Ovary (tissue), 10 donors: ENCODE measurements at regions of chr5 and their contacts with region 1.

Region 1: DNA sequence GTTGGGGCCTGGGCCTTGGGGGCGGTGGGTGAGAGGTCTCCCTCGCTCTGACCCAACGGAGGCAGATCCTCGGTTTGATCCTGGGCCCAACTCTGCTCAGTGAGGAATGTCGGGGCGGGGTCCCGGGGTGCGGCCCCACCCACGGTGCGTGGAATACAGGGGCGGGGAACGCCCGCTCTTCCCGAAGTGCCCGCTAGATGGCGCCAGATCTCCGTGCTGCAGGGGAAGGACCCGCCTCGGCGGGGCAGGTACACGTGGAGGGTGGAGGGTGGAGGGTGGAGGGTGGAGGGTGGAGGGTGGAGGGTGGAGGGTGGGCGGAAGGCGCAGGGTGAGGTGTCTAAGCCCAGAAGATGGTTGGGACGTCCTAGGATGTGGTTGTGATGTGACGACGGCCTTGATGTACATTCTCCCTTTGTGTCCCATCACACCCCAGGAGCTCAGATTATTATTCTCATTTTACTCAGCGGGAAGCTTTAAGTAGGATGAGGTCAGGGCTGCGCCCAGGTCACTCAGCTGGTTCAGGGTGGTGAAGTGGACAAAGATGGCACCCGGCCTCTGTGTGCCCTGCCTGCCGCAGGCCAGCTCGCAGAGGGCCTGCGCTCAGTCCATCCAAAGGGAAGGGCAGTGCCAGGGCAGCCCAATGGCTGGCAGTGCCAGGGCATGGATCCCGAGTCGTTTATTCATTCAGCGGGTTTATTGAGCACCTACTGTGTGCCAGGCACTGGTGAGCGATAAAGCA is 9.4 kb upstream of the RPS14 start:
- DNase-seq: peak; percentile 73 to 92 (median 86)
- H3K4me3 ChIP-seq: no peak overlapping the region
- H3K27ac ChIP-seq: no peak overlapping the region
- H3K4me1 ChIP-seq: peaks cover 6% of the 10 kb centered on the region
- H3K27me3 ChIP-seq: no peaks in the 10 kb centered on the region
- CTCF ChIP-seq: peak; percentile 76 to 94 (median 86)
- EP300 ChIP-seq: no peak
- POLR2A ChIP-seq: no peak

Region 2: GRCh38 chr5:150523472-150524350 is 64.7 kb after region 1 on chr5:
- intact Hi-C with region 1: loop called in 2 of 4 experiments (anchors 5 kb)
- DNase-seq: peak in 1 of 5 donors; percentile 59
- H3K4me3 ChIP-seq: no peak overlapping the region
- H3K27ac ChIP-seq: peak overlapping the region in 1 of 2 donors; percentile 38
- H3K4me1 ChIP-seq: peaks cover 15% of the 10 kb centered on the region
- H3K27me3 ChIP-seq: no peaks in the 10 kb centered on the region
- CTCF ChIP-seq: peak in 2 of 3 donors; percentile 43 to 59
- EP300 ChIP-seq: no peak
- POLR2A ChIP-seq: no peak

Region 3: DNA sequence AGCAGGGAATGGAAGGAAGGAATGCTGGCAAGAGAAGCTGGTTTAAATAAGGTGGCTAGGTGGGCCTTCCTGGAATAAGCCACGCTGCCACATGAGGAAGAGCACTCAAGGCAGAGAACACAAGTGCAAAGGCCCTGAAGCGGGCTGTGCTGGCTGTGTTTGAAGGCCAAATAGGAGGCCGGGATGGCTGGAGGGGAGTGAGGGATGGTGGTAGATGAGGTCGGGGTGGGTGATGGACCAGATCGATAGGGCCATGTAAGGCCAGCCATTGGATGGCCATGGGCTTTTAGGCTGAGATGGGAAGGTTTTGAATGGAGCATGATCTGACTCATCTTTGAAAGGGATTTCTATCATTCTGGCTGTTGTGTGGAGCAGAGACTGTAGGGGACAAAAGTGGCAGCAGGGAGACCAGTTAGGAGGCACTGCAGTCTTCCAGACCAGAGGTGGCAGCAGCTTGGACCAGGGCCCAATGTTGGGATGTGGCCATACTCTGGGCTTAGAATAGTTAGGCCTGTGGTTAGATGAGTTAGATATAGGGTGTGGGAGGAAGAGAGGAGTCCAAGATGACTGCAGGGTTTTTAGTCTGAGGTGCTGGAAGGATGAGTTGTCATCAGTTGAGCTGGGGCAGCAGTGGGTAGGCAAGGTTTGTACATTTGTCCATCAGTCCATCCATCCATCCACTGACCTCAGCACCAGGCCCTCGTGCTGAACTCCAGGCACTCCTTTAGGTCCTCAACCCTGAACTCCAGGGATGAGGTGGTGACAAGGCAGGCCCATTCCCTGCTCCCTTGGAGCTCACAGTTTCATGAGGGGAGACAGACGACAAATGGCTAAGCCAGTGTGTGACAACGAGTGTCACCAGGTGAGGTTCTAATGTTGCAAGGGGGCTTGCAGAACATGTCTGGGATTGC is 79.3 kb after region 1 on chr5:
- intact Hi-C with region 1: loop called in 2 of 4 experiments (anchors 5 kb)
- DNase-seq: no peak
- H3K4me3 ChIP-seq: no peak overlapping the region
- H3K27ac ChIP-seq: peak overlapping the region; percentile 52 to 88
- H3K4me1 ChIP-seq: peaks cover 48% of the 10 kb centered on the region
- H3K27me3 ChIP-seq: no peaks in the 10 kb centered on the region
- CTCF ChIP-seq: no peak
- EP300 ChIP-seq: no peak
- POLR2A ChIP-seq: no peak

Region 4: DNA sequence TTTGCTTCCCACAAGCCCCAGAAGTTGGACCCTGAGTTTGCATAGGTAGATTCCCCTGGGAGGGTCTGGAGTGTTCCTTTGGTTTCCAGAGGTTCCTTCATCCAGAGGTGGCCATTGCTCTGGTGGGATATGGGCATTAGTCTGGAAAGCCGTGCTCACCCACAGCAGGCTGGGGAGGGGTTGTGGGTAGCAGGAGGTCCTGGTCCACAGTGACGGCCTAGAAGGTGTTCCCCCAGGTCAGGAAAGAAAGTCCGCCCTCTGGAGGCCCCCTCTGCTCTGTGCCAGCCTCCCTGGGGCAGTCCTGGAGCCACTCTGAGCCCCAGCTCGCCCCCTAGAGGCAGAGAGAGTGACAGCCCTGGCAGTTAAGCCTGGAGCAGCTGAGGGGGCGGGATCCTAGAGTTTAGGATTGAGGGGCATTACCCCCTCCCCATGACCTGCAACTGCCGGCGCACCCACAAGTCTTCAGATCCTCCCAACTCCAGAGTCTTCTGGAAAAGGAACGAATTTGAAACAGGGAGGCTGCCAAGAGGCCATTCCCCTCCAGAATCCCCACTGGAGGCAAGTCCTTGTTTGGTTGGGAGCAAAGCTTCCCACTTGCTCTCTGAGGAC is 85.7 kb after region 1 on chr5:
- intact Hi-C with region 1: loop called in 3 of 4 experiments (anchors 5 kb)
- DNase-seq: peak; percentile 61 to 79 (median 72)
- H3K4me3 ChIP-seq: no peak overlapping the region
- H3K27ac ChIP-seq: no peak overlapping the region
- H3K4me1 ChIP-seq: peaks cover 16% of the 10 kb centered on the region
- H3K27me3 ChIP-seq: no peaks in the 10 kb centered on the region
- CTCF ChIP-seq: peak; percentile 46 to 72 (median 59)
- EP300 ChIP-seq: no peak
- POLR2A ChIP-seq: no peak

Region 5: DNA sequence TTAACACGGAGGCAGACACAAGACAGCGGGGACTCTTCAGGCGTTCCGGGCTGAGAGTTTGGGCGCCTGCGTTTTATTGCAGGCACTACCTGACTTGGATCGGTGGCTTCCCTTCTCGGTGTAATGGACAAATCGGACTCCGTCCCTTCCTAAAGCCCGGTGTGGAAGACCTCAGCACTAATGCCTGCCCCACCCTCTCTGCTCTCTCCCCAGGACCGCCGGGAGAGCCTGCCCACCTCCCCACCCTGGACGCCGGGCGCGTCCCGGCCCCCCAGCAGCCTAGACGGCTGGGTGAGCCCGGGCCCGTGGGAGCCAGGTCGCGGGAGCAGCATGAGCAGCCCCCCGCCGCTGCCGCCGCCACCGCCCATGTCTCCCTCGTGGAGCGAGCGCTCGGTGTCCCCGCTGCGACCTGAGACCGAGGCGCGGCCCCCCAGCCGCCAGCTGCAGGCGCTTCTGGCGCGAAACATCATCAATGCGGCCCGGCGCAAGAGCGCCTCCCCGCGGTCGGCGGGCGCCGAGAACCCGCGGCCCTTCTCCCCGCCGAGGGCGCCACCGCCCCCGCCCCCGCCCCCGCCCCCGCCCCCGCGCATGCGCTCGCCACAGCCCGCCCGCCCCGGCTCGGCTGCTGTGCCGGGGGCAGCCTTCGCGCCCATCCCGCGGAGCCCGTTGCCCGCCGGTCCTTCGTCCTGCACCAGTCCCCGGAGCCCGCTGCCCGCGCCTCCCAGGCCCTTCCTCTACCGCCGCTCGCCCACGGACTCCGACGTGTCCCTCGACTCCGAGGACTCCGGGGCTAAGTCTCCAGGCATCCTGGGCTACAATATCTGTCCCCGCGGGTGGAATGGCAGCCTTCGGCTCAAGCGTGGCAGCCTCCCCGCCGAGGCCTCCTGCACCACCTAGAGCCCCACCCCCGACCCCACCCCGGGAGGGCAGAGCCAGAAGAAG is 197.5 kb after region 1 on chr5:
- intact Hi-C with region 1: loop called in 2 of 4 experiments (anchors 5 to 10 kb)
- DNase-seq: peak; percentile 79 to 92 (median 87)
- H3K4me3 ChIP-seq: peak overlapping the region; percentile 45
- H3K27ac ChIP-seq: peak overlapping the region; percentile 35 to 39
- H3K4me1 ChIP-seq: peaks cover 21% of the 10 kb centered on the region
- H3K27me3 ChIP-seq: no peaks in the 10 kb centered on the region
- CTCF ChIP-seq: peak; percentile 39 to 77 (median 72)
- EP300 ChIP-seq: no peak
- POLR2A ChIP-seq: no peak

Region 6: GRCh38 chr5:150960791-150961396 is 501.9 kb after region 1 on chr5:
- intact Hi-C with region 1: no loop called
- DNase-seq: no peak
- H3K4me3 ChIP-seq: no peak overlapping the region
- H3K27ac ChIP-seq: no peak overlapping the region
- H3K4me1 ChIP-seq: no peaks in the 10 kb centered on the region
- H3K27me3 ChIP-seq: no peaks in the 10 kb centered on the region
- CTCF ChIP-seq: no peak
- EP300 ChIP-seq: no peak
- POLR2A ChIP-seq: no peak

Region 7: GRCh38 chr5:151020304-151021110 is 561.5 kb after region 1 on chr5 and contains the start of gene GPX3:
- intact Hi-C with region 1: loop called in 1 of 4 experiments (anchors 5 kb)
- DNase-seq: peak; percentile 82 to 91 (median 84)
- H3K4me3 ChIP-seq: peak within 1 kb of the TSS; percentile 64
- H3K27ac ChIP-seq: peak within 1 kb of the TSS; percentile 28 to 51
- H3K4me1 ChIP-seq: peaks cover 23% of the 10 kb centered on the region
- H3K27me3 ChIP-seq: no peaks in the 10 kb centered on the region
- CTCF ChIP-seq: no peak
- EP300 ChIP-seq: no peak
- POLR2A ChIP-seq: peak; percentile 79
- total RNA-seq, gene GPX3: 110 to 380 (median 269) TPM

Region 8: DNA sequence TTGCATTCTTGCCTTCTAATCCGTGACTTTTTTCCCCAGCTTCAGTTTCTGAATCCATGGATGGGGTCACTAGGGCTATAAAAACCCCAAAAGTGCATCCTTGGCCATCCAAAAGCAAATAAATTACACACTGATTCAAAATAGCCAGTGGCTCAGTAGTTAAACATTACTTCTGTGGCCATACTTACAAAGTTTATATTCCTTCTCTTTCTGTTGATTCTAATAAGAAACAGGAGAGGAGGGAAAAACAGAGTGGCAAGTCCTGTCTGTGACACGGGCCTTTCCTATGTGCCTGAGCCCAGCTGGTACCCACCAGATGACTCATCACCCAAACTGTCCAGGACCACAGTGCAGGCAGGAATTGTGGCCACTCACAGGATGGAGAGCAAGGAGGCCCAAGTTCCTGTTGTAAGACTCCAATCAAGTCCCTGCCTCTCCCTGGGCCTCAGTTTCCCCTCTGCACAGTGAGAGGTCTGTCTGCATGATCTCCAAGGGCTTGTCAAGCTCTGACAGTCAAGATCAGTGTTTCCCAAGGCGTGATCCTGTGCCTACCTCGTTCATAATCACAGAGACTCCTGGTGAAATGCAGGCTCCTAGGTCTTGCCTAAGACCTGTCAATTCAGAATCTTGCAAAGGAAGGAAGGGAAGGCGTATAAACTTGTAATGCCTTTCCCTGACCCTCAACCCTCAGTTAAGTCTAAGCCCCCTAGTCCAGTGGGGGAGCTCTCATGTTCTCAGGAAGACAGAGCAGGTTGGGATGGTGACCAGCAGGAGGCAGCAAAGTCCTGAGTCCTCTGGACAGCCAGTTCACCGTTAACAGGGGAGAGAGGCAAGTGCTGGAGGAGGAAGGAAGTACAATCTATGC is 592.3 kb after region 1 on chr5:
- intact Hi-C with region 1: no loop called
- DNase-seq: peak; percentile 81 to 90 (median 87)
- H3K4me3 ChIP-seq: no peak overlapping the region
- H3K27ac ChIP-seq: no peak overlapping the region
- H3K4me1 ChIP-seq: no peaks in the 10 kb centered on the region
- H3K27me3 ChIP-seq: no peaks in the 10 kb centered on the region
- CTCF ChIP-seq: peak; percentile 70 to 95 (median 81)
- EP300 ChIP-seq: no peak
- POLR2A ChIP-seq: no peak

Region 9: DNA sequence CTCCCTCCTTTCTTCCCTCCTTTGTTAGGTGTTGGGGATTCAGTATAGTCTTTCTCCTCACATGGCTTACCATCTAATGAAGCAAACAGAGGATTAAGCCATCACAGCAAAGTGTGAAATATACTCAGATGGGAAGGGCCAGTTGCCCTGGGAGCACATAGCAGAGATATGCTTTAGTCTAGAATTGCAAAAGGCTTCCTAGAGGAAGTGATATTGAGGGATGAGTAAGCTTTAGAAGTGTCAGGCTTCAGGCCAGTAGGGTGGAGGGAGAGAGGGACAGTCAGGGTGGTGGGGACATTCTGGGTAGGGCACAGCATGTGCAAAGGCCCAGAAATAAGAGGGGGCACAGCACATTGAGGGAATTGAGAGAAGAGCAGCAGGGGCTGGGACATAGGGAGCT is 1511.9 kb after region 1 on chr5:
- intact Hi-C with region 1: no loop called
- DNase-seq: no peak
- H3K4me3 ChIP-seq: no peak overlapping the region
- H3K27ac ChIP-seq: no peak overlapping the region
- H3K4me1 ChIP-seq: no peaks in the 10 kb centered on the region
- H3K27me3 ChIP-seq: no peaks in the 10 kb centered on the region
- CTCF ChIP-seq: no peak
- EP300 ChIP-seq: no peak
- POLR2A ChIP-seq: no peak